CD4-positive, alpha-beta T cell (primary cell): ENCODE measurements at regions of chrX and their contacts with region 1.

Region 1: GRCh38 chrX:155108427-155108826 is 37.1 kb downstream of the BRCC3 start:
- DNase-seq: no peak
- ATAC-seq: no peak
- H3K4me3 ChIP-seq: no peak overlapping the region
- H3K4me3 Mint-ChIP-seq: no peak overlapping the region
- H3K27ac ChIP-seq: no peak overlapping the region
- H3K27ac Mint-ChIP-seq: no peak overlapping the region
- H3K4me1 ChIP-seq: no peaks in the 10 kb centered on the region
- H3K4me1 Mint-ChIP-seq: peaks cover 7% of the 10 kb centered on the region
- H3K27me3 ChIP-seq: no peaks in the 10 kb centered on the region
- H3K27me3 Mint-ChIP-seq: no peaks in the 10 kb centered on the region
- CTCF ChIP-seq: no peak

Region 2: GRCh38 chrX:155662282-155662681 is 553.9 kb after region 1 on chrX:
- CTCF ChIA-PET with region 1: no interaction called
- POLR2A ChIA-PET with region 1: no interaction called
- intact Hi-C with region 1: loop called in 1 of 2 experiments (anchors 10 kb)
- DNase-seq: no peak
- ATAC-seq: no peak
- H3K4me3 ChIP-seq: no peak overlapping the region
- H3K4me3 Mint-ChIP-seq: no peak overlapping the region
- H3K27ac ChIP-seq: no peak overlapping the region
- H3K27ac Mint-ChIP-seq: no peak overlapping the region
- H3K4me1 ChIP-seq: no peaks in the 10 kb centered on the region
- H3K4me1 Mint-ChIP-seq: no peaks in the 10 kb centered on the region
- H3K27me3 ChIP-seq: no peaks in the 10 kb centered on the region
- H3K27me3 Mint-ChIP-seq: no peaks in the 10 kb centered on the region
- CTCF ChIP-seq: no peak